ENCODE measurements at regions of chr19 and their contacts with region 1.

Region 1: DNA sequence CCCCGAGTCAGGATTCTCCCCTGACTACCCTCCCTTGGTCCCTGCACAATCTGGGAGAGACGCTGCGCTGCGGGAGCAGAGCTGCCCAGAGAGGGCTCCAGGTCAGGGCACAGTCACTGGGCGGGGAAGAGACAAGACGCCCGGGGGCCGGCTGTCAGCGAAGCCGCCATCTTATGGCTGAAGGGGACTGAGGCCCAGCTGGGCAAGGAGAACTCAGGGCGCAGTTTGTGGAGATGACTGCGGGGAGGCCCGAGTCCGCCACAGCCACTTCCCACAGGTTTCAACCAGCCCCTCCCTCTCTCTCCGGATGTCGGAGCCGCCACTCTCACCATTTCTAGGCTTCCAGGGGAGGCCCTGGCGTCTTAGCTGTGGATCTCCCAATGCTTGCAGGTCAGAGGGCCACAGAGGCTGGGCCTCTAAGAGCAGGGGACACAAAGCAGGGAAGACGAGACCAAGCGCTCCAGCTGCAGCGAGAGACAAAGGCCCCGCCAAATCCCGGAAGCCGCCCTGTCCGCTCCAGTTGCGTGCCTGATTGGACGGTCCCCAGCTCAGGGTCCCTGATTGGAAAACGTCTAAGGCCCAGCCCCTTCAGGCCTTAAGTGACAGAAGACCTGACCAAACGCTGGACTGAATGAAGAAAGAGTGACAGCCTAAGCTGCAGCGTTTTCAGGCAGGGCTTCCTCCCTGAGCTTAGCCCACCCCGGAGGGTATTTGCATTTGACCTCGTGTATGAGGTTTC is at the start of gene ZNF724:
- DNase-seq: peak; percentile 78 to 94 (median 88)
- ATAC-seq: peak; percentile 99
- H3K4me3 ChIP-seq: peak within 1 kb of the TSS; percentile 77 to 99
- H3K4me3 Mint-ChIP-seq: peak within 1 kb of the TSS; percentile 96
- H3K27ac ChIP-seq: peak within 1 kb of the TSS; percentile 54 to 62
- H3K27ac Mint-ChIP-seq: peak within 1 kb of the TSS; percentile 81
- H3K4me1 ChIP-seq: no peaks in the 10 kb centered on the region
- H3K4me1 Mint-ChIP-seq: peaks cover 12% of the 10 kb centered on the region
- H3K27me3 ChIP-seq: no peaks in the 10 kb centered on the region
- H3K27me3 Mint-ChIP-seq: no peaks in the 10 kb centered on the region
- CTCF ChIP-seq: no peak
- total RNA-seq, gene ZNF724: 3.6 to 4.2 TPM

Region 2: GRCh38 chr19:21851596-21852345 is 1398.3 kb before region 1 on chr19:
- CTCF ChIA-PET with region 1: no interaction called
- POLR2A ChIA-PET with region 1: no interaction called
- intact Hi-C with region 1: loop called in 1 of 2 experiments (anchors 10 kb)
- DNase-seq: peak; percentile 72 to 94 (median 90)
- ATAC-seq: peak; percentile 99
- H3K4me3 ChIP-seq: peak overlapping the region; percentile 95
- H3K4me3 Mint-ChIP-seq: peak overlapping the region; percentile 93
- H3K27ac ChIP-seq: peak overlapping the region; percentile 68 to 80
- H3K27ac Mint-ChIP-seq: peak overlapping the region; percentile 91
- H3K4me1 ChIP-seq: peaks cover 11% of the 10 kb centered on the region
- H3K4me1 Mint-ChIP-seq: peaks cover 26% of the 10 kb centered on the region
- H3K27me3 ChIP-seq: no peaks in the 10 kb centered on the region
- H3K27me3 Mint-ChIP-seq: peaks cover 2% of the 10 kb centered on the region
- CTCF ChIP-seq: no peak

Region 3: DNA sequence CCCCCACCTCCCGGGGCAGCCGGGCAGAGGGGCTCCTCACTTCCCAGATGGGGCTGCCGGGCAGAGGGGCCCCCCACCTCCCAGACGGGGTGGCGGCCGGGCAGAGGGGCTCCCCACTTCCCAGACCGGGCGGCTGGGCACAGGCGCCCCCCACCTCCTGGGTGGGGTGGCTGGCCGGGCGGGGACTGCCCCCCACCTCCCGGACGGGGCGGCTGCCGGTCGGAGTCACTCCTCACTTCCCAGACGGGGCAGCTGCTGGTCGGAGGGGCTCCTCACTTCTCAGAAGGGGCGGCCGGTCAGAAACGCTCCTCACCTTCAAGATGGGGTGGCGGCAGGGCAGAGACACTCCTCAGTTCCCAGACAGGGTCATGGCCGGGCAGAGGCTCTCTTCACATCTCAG is 89.3 kb before region 1 on chr19:
- CTCF ChIA-PET with region 1: no interaction called
- POLR2A ChIA-PET with region 1: no interaction called
- intact Hi-C with region 1: no loop called
- DNase-seq: peak in 1 of 9 experiments; percentile 0
- ATAC-seq: no peak
- H3K4me3 ChIP-seq: no peak overlapping the region
- H3K4me3 Mint-ChIP-seq: no peak overlapping the region
- H3K27ac ChIP-seq: no peak overlapping the region
- H3K27ac Mint-ChIP-seq: no peak overlapping the region
- H3K4me1 ChIP-seq: no peaks in the 10 kb centered on the region
- H3K4me1 Mint-ChIP-seq: no peaks in the 10 kb centered on the region
- H3K27me3 ChIP-seq: no peaks in the 10 kb centered on the region
- H3K27me3 Mint-ChIP-seq: no peaks in the 10 kb centered on the region
- CTCF ChIP-seq: no peak

Region 4: GRCh38 chr19:23273590-23274413 is 23.7 kb after region 1 on chr19:
- CTCF ChIA-PET with region 1: interaction called, 5 read pairs
- POLR2A ChIA-PET with region 1: interaction called, 29 read pairs
- intact Hi-C with region 1: loop called (anchors 1 kb)
- DNase-seq: peak; percentile 80 to 95 (median 92)
- ATAC-seq: peak; percentile 98
- H3K4me3 ChIP-seq: peak overlapping the region; percentile 80 to 95
- H3K4me3 Mint-ChIP-seq: peak overlapping the region; percentile 98
- H3K27ac ChIP-seq: peak overlapping the region; percentile 78 to 83
- H3K27ac Mint-ChIP-seq: peak overlapping the region; percentile 97
- H3K4me1 ChIP-seq: peaks cover 8% of the 10 kb centered on the region
- H3K4me1 Mint-ChIP-seq: peaks cover 35% of the 10 kb centered on the region
- H3K27me3 ChIP-seq: no peaks in the 10 kb centered on the region
- H3K27me3 Mint-ChIP-seq: no peaks in the 10 kb centered on the region
- CTCF ChIP-seq: no peak

Region 5: DNA sequence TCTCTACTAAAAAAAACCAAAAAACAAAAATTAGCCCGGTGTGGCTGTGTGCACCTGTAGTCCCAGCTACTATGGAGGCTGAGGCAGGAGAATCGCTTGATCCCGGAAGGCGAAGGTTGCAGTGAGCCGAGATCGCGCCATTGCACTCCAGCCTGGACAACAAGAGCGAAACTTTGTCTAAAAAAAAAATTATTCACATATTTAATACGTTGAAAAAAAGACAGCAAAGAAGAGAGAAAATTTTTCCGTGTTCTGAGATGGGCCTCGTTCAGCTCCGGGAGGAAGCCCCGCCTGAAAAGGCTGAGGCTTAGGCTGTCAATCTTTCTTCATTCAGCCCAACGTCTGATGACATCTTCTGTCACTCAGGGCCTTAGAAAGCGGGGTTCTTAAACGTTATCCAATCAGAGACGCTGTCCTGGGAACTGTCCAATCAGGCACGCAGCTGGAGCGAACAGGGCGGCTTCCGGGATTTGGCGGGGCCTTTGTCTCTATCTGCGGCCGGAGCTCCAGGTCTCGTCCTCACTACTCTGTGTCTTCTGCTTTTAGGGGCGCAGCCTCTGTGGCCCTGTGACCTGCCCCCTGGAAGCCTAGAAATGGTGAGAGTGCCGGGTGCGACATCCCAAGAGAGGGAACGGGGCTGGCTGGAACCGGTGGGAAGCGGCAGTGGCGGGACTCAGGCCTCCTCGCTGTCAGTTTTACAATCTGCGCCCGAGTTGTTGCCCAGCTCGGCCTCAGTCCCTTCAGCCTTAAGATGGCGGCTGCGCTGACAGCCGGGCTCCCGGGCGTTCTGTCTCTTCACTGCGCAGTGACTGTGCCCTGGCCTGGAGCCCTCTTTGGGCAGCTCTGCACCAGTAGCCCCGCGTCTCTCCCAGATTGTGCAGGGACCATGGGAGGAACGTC is 664.6 kb after region 1 on chr19 and contains the start of gene ZNF726:
- CTCF ChIA-PET with region 1: no interaction called
- POLR2A ChIA-PET with region 1: no interaction called
- intact Hi-C with region 1: loop called (anchors 1 to 10 kb)
- DNase-seq: peak; percentile 74 to 94 (median 86)
- ATAC-seq: peak; percentile 98
- H3K4me3 ChIP-seq: peak within 1 kb of the TSS; percentile 56 to 72
- H3K4me3 Mint-ChIP-seq: peak within 1 kb of the TSS; percentile 94
- H3K27ac ChIP-seq: peak within 1 kb of the TSS; percentile 43 to 47
- H3K27ac Mint-ChIP-seq: peak within 1 kb of the TSS; percentile 88
- H3K4me1 ChIP-seq: peaks cover 6% of the 10 kb centered on the region
- H3K4me1 Mint-ChIP-seq: peaks cover 13% of the 10 kb centered on the region
- H3K27me3 ChIP-seq: no peaks in the 10 kb centered on the region
- H3K27me3 Mint-ChIP-seq: no peaks in the 10 kb centered on the region
- CTCF ChIP-seq: no peak
- total RNA-seq, gene ZNF726: 3.5 to 4.4 TPM

Region 6: GRCh38 chr19:24033301-24033962 is 783.4 kb after region 1 on chr19:
- CTCF ChIA-PET with region 1: no interaction called
- POLR2A ChIA-PET with region 1: no interaction called
- intact Hi-C with region 1: loop called in 1 of 2 experiments (anchors 5 kb)
- DNase-seq: peak; percentile 70 to 92 (median 84)
- ATAC-seq: peak; percentile 99
- H3K4me3 ChIP-seq: peak overlapping the region; percentile 99
- H3K4me3 Mint-ChIP-seq: peak overlapping the region; percentile 100
- H3K27ac ChIP-seq: peak overlapping the region; percentile 88 to 92
- H3K27ac Mint-ChIP-seq: peak overlapping the region; percentile 99
- H3K4me1 ChIP-seq: peaks cover 34% of the 10 kb centered on the region
- H3K4me1 Mint-ChIP-seq: peaks cover 48% of the 10 kb centered on the region
- H3K27me3 ChIP-seq: no peaks in the 10 kb centered on the region
- H3K27me3 Mint-ChIP-seq: no peaks in the 10 kb centered on the region
- CTCF ChIP-seq: no peak